Endothelial cell of umbilical vein (primary cell): ENCODE measurements at regions of chr1 and their contacts with region 1.

Region 1: DNA sequence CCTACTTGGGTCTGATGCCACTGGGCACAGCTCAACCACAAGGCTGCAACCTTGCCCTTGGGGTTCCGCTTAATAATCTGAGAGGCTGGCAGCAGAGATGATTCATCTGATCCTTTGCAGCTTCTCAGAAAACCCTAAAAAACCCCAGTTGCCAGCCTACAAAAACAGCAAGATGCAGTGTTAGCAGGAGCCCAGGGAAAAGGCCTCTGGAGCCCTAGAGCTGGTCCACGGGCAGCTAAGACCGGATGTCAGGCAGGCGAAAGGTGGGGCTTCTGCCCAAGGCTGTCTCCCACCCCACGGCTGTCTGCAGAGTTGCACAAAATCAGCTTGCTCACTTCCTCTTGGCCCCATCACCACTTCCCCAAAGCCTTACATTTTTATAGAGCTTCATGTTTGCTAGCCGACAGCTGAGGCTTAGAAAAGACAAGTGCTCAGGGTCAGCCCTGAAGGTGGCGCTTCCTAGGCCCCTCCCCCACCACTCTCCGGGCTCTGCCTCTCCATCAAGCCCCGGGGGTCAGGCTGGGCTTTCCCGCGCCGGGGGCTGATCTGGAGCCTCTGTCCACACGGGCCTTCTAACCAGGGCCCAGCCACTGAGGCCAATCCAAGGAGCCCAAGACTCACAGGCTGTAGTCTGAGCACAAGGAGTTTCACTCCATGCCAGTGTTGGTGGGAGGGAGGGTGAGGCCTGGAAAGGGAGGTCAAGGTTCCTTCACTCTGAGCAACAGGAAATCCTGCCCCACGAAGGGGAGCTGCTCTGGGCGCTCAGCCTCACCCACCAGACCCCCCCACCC is 4.2 kb upstream of the ADORA3 start:
- DNase-seq: peak; percentile 64
- H3K4me3 ChIP-seq: peak overlapping the region in 1 of 3 experiments; percentile 4
- H3K27ac ChIP-seq: peak overlapping the region; percentile 86
- H3K4me1 ChIP-seq: peaks cover 15% of the 10 kb centered on the region
- H3K27me3 ChIP-seq: peaks cover 0 to 2% of the 10 kb centered on the region in 2 experiments
- CTCF ChIP-seq: peak in 1 of 2 donors; percentile 17
- POLR2A ChIP-seq: no peak

Region 2: GRCh38 chr1:111192658-111193519 is 314.7 kb before region 1 on chr1:
- CTCF ChIA-PET with region 1: no interaction called
- POLR2A ChIA-PET with region 1: no interaction called
- dilution Hi-C with region 1: no loop called
- intact Hi-C with region 1: no loop called
- DNase-seq: peak; percentile 42
- H3K4me3 ChIP-seq: no peak overlapping the region
- H3K27ac ChIP-seq: no peak overlapping the region
- H3K4me1 ChIP-seq: no peaks in the 10 kb centered on the region
- H3K27me3 ChIP-seq: peaks cover 5 to 6% of the 10 kb centered on the region in 2 experiments
- CTCF ChIP-seq: no peak
- POLR2A ChIP-seq: no peak

Region 3: DNA sequence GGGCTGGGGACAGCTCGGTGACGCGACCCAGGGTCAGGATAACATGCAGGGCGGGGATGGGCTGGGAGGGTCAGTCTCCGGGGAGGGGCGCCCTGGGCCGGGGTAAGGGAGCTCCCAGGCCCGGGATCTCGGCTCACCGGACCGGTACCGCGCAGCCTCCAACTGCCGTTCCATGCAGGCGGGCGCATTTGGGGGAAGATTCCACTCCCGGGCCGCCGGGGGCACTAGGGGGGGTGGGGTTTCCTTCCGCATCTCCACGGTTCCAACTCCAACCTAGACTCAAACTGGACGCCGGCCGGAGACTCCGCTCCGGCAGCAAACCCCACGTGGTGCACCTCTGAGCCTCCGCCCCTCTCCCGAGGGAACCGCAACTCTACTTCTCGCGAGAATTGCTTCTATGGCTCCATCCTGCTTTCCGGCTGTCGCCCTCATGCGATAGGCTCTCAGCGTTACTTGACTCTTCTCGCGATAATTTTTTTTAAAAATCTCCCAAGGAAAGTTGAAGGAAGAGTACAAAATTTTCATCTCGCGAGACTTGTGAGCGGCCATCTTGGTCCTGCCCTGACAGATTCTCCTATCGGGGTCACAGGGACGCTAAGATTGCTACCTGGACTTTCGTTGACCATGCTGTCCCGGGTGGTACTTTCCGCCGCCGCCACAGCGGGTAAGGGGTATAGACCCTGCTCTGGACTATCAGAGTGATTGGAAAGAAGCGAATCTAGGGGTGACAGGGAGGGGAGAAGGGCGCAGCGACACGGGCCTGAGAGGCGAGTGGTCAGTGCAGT is 58.5 kb before region 1 on chr1 and contains the starts of genes ATP5PB and WDR77:
- CTCF ChIA-PET with region 1: interaction called, 5 read pairs
- POLR2A ChIA-PET with region 1: no interaction called
- dilution Hi-C with region 1: no loop called
- intact Hi-C with region 1: loop called (anchors 1 kb)
- DNase-seq: peak; percentile 99
- H3K4me3 ChIP-seq: peak within 1 kb of the TSS; percentile 72 to 96 (median 87)
- H3K27ac ChIP-seq: peak within 1 kb of the TSS; percentile 74
- H3K4me1 ChIP-seq: peaks cover 21% of the 10 kb centered on the region
- H3K27me3 ChIP-seq: no peaks in the 10 kb centered on the region
- CTCF ChIP-seq: no peak
- POLR2A ChIP-seq: peak; percentile 60
- total RNA-seq, gene ATP5PB: 235 and 244 TPM in 2 replicates
- total RNA-seq, gene WDR77: 35.6 and 41.3 TPM in 2 replicates

Region 4: DNA sequence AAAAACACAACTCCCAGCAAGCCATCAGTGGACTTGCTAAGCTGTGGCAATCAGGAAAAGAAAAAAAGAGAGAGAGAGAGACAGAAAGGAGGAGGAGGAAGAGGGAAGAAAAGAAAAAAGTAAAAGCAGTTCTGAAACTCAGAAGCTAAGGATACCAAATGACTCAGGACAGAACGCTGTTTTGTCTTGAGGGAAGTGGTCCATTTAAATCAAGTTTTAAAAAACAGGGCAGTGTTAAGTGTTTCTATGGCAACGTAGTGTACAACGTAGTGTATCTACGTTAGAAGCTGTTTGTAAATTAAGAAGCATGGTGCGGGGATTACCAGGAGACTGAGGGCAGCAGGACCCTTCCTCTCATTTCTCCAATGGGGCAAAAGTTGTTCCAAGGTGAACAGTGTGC is 10.0 kb before region 1 on chr1:
- CTCF ChIA-PET with region 1: interaction called, 39 read pairs
- POLR2A ChIA-PET with region 1: interaction called, 3 read pairs
- dilution Hi-C with region 1: no loop called
- intact Hi-C with region 1: no loop called
- DNase-seq: no peak
- H3K4me3 ChIP-seq: no peak overlapping the region
- H3K27ac ChIP-seq: no peak overlapping the region
- H3K4me1 ChIP-seq: no peaks in the 10 kb centered on the region
- H3K27me3 ChIP-seq: peaks cover 18 to 29% of the 10 kb centered on the region in 2 experiments
- CTCF ChIP-seq: no peak
- POLR2A ChIP-seq: no peak

Region 5: DNA sequence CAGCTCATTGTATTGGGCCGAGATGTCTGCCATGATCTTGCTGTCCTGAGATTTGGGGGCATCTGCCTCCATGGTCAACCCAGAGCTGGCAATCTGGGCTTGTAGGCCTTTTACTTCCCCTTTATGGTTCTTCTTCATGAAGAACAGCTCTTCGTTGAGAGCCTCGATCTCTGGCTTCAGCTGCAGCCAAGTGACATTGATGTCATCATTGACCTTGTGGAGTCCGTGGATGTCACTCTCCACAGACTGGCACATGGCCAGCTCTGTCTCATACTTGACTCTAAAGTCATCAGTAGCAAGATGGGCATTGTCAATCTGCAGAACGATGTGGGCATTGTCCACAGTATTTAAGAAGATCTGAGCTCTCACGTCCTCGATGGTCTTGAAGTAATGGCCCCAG is 141.2 kb after region 1 on chr1:
- CTCF ChIA-PET with region 1: interaction called, 12 read pairs
- POLR2A ChIA-PET with region 1: no interaction called
- dilution Hi-C with region 1: no loop called
- intact Hi-C with region 1: no loop called
- DNase-seq: no peak
- H3K4me3 ChIP-seq: no peak overlapping the region
- H3K27ac ChIP-seq: no peak overlapping the region
- H3K4me1 ChIP-seq: no peaks in the 10 kb centered on the region
- H3K27me3 ChIP-seq: no peaks in the 10 kb centered on the region
- CTCF ChIP-seq: no peak
- POLR2A ChIP-seq: no peak

Region 6: GRCh38 chr1:111739194-111739924 is 231.8 kb after region 1 on chr1 and contains the start of gene INKA2:
- CTCF ChIA-PET with region 1: interaction called, 23 read pairs
- POLR2A ChIA-PET with region 1: no interaction called
- dilution Hi-C with region 1: no loop called
- intact Hi-C with region 1: no loop called
- DNase-seq: peak; percentile 89
- H3K4me3 ChIP-seq: peak within 1 kb of the TSS; percentile 50 to 68 (median 61)
- H3K27ac ChIP-seq: peak within 1 kb of the TSS; percentile 47
- H3K4me1 ChIP-seq: peaks cover 29% of the 10 kb centered on the region
- H3K27me3 ChIP-seq: peaks cover 4 to 6% of the 10 kb centered on the region in 2 experiments
- CTCF ChIP-seq: no peak
- POLR2A ChIP-seq: no peak
- total RNA-seq, gene INKA2: 5.3 and 7.8 TPM in 2 replicates

Region 7: GRCh38 chr1:111762332-111762731 is 254.7 kb after region 1 on chr1:
- CTCF ChIA-PET with region 1: interaction called, 62 read pairs
- POLR2A ChIA-PET with region 1: no interaction called
- dilution Hi-C with region 1: no loop called
- intact Hi-C with region 1: no loop called
- DNase-seq: peak; percentile 23
- H3K4me3 ChIP-seq: no peak overlapping the region
- H3K27ac ChIP-seq: peak overlapping the region; percentile 32
- H3K4me1 ChIP-seq: peaks cover 27% of the 10 kb centered on the region
- H3K27me3 ChIP-seq: no peaks in the 10 kb centered on the region
- CTCF ChIP-seq: no peak
- POLR2A ChIP-seq: no peak

Region 8: GRCh38 chr1:112488141-112488540 is 980.5 kb after region 1 on chr1:
- CTCF ChIA-PET with region 1: no interaction called
- POLR2A ChIA-PET with region 1: no interaction called
- dilution Hi-C with region 1: no loop called
- intact Hi-C with region 1: no loop called
- DNase-seq: no peak
- H3K4me3 ChIP-seq: no peak overlapping the region
- H3K27ac ChIP-seq: no peak overlapping the region
- H3K4me1 ChIP-seq: no peaks in the 10 kb centered on the region
- H3K27me3 ChIP-seq: no peaks in the 10 kb centered on the region
- CTCF ChIP-seq: no peak
- POLR2A ChIP-seq: no peak

Region 9: GRCh38 chr1:112594259-112594884 is 1086.8 kb after region 1 on chr1:
- CTCF ChIA-PET with region 1: no interaction called
- POLR2A ChIA-PET with region 1: no interaction called
- dilution Hi-C with region 1: no loop called
- intact Hi-C with region 1: no loop called
- DNase-seq: no peak
- H3K4me3 ChIP-seq: no peak overlapping the region
- H3K27ac ChIP-seq: no peak overlapping the region
- H3K4me1 ChIP-seq: peaks cover 20% of the 10 kb centered on the region
- H3K27me3 ChIP-seq: no peaks in the 10 kb centered on the region
- CTCF ChIP-seq: no peak
- POLR2A ChIP-seq: no peak